Dorsolateral prefrontal cortex (tissue), 120 donors: ENCODE measurements at regions of chr13 and their contacts with region 1.

Region 1: GRCh38 chr13:51452361-51453206 is at the start of gene INTS6:
- DNase-seq: peak in 9 of 10 donors; percentile 100
- H3K4me3 ChIP-seq: peak within 1 kb of the TSS; percentile 76 to 96 (median 90)
- H3K27ac ChIP-seq: peak within 1 kb of the TSS; percentile 89 to 100 (median 99)
- H3K27me3 ChIP-seq: no peaks in the 10 kb centered on the region
- CTCF ChIP-seq: peak in 2 of 56 donors; percentile 0 to 9
- total RNA-seq, gene INTS6: 30.1 to 60.5 (median 42.9) TPM

Region 2: GRCh38 chr13:51286135-51287002 is 166.2 kb before region 1 on chr13:
- intact Hi-C with region 1: no loop called
- DNase-seq: peak; percentile 78 to 91 (median 88)
- H3K4me3 ChIP-seq: peak overlapping the region in 12 of 59 donors; percentile 7 to 30 (median 21)
- H3K27ac ChIP-seq: peak overlapping the region in 40 of 59 donors; percentile 4 to 79 (median 54)
- H3K27me3 ChIP-seq: no peaks in the 10 kb centered on the region
- CTCF ChIP-seq: peak; percentile 92 to 99 (median 97)

Region 3: DNA sequence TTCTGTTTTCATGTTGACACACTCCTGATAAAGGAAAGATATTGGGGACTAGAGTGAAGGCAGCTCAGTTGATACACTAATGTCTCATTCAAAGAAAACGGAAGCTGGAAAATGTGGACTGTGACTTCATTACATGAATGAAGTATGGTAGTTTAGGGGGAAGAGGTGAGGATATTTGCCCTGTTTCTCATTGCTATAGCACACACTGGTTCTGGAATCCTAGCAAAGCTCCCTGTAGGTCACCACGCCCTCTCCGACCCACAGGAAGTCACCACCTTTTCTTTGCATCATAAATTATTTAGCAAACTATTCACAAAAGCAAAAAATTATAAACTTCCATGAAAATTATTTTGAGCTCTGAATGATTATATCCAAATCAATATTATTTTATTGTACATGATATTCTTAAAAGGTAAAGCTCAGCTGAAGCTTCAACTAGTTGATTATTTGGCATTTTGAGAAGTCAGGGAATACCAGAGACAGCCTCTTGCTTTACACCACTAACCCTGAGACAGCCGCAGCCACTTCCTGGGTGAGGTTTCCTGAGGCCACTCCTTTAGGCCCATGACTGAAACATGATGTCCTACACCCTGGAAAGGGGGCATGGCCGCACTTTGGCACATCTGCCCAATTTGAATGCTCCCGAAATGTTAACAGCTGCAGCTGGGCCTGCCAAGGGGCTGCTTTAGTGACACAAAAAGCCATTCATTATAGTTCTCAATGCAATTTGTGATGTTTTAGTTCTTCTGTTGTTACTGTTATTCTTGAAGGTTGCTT is 81.6 kb after region 1 on chr13:
- intact Hi-C with region 1: loop called in 1 of 2 experiments (anchors 10 kb)
- DNase-seq: peak in 7 of 10 donors; percentile 20 to 67 (median 52)
- H3K4me3 ChIP-seq: peak overlapping the region in 2 of 59 donors; percentile 3 to 15
- H3K27ac ChIP-seq: peak overlapping the region in 54 of 59 donors; percentile 4 to 91 (median 73)
- H3K27me3 ChIP-seq: no peaks in the 10 kb centered on the region
- CTCF ChIP-seq: peak in 2 of 56 donors; percentile 12

Region 4: GRCh38 chr13:51632591-51633362 is 180.2 kb after region 1 on chr13:
- intact Hi-C with region 1: loop called in 1 of 2 experiments (anchors 5 kb)
- DNase-seq: peak; percentile 21 to 88 (median 84)
- H3K4me3 ChIP-seq: peak overlapping the region in 44 of 59 donors; percentile 3 to 57 (median 30)
- H3K27ac ChIP-seq: peak overlapping the region; percentile 54 to 97 (median 90)
- H3K27me3 ChIP-seq: no peaks in the 10 kb centered on the region
- CTCF ChIP-seq: peak in 13 of 56 donors; percentile 11 to 44 (median 26)